PC-9 (cell line): ENCODE measurements at regions of chr7 and their contacts with region 1.

Region 1: DNA sequence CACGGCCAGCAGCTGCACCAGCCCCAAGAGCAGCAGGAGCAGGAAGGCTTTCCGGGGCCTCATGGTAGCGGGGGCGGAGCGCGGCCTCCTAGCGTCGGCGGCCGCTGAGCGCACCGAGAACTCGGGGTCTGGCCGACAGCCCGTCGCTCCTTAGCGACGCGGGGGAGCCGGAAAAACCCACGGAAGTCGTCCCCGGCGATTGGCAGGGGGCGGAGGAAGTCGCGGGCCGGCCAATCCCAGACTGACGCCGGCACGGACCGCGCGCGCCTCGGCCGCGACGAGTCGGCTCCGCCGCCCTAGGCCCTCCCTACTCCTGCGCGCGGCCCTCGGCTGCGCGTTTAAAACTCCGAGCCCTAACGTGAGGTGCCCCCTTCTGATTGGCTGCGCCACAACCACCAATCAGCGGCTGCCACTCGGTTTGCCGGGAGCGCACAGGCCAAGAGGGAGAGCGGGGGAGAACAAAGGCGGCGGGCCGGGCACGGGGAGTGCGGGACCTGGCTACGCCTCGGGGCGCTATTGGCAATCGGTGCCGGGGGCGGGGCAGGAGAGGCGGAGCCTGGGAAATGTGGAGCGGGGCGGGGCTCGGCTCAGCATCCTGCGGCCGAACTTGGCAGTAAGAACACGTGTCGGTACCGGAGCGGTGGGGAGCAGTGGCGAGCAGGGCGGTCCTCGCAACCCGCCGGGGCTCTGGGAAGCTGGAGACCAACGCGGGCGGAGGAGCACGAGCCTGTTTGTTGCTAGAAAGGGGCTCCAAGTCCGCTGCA is at the start of gene PDIA4:
- DNase-seq: peak; percentile 98 to 100
- H3K4me3 ChIP-seq: peak within 1 kb of the TSS; percentile 73
- H3K27ac ChIP-seq: peak within 1 kb of the TSS; percentile 78
- H3K4me1 ChIP-seq: peaks cover 24% of the 10 kb centered on the region
- H3K27me3 ChIP-seq: no peaks in the 10 kb centered on the region
- CTCF ChIP-seq: peak; percentile 17; the same call in 1 of the 2 replicates
- total RNA-seq, gene PDIA4: 200 and 221 TPM in 2 replicates

Region 2: DNA sequence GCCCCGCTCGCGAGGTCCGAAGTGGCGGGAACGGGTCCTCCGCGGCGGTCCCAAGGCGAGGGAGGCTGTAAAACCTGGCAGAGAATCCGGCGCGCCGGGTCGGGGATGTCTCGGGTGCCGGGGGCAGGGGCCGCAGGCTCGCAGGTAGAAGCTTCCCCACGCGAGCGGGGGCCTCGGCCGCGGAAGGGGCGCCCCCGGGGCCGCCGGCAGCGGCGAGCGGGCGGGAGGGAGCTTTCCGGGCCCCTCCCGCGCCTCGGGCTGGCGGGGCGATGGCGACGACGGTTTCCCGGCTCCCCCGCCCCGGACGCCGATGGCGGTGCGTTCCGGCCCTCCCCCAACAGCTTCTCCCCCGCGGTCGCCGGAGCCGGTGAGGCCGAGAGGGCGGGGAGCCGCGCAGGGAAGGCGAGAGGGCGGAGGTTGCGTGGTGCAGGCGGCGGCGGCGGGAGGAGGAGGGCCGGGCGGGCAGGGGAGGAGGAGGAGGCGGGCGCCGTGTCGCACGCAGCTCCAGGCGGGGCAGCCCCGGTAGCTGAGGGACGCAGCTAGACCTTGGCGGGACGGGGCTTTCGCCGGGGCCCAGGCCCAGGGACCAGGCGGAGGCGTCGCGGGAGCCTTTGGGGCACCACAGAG is 330.0 kb before region 1 on chr7 and contains the start of gene CUL1:
- CTCF ChIA-PET with region 1: interaction called, 11 read pairs
- POLR2A ChIA-PET with region 1: no interaction called
- intact Hi-C with region 1: no loop called
- DNase-seq: peak; percentile 64 to 92
- H3K4me3 ChIP-seq: peak within 1 kb of the TSS; percentile 76
- H3K27ac ChIP-seq: peak within 1 kb of the TSS; percentile 79
- H3K4me1 ChIP-seq: peaks cover 39% of the 10 kb centered on the region
- H3K27me3 ChIP-seq: no peaks in the 10 kb centered on the region
- CTCF ChIP-seq: no peak
- total RNA-seq, gene CUL1: 54.7 and 78.3 TPM in 2 replicates

Region 3: GRCh38 chr7:148987010-148987750 is 41.3 kb before region 1 on chr7:
- CTCF ChIA-PET with region 1: no interaction called
- POLR2A ChIA-PET with region 1: no interaction called
- intact Hi-C with region 1: loop called (anchors 1 kb)
- DNase-seq: peak; percentile 86 to 91
- H3K4me3 ChIP-seq: peak overlapping the region; percentile 88
- H3K27ac ChIP-seq: peak overlapping the region; percentile 78
- H3K4me1 ChIP-seq: peaks cover 46% of the 10 kb centered on the region
- H3K27me3 ChIP-seq: no peaks in the 10 kb centered on the region
- CTCF ChIP-seq: no peak

Region 4: DNA sequence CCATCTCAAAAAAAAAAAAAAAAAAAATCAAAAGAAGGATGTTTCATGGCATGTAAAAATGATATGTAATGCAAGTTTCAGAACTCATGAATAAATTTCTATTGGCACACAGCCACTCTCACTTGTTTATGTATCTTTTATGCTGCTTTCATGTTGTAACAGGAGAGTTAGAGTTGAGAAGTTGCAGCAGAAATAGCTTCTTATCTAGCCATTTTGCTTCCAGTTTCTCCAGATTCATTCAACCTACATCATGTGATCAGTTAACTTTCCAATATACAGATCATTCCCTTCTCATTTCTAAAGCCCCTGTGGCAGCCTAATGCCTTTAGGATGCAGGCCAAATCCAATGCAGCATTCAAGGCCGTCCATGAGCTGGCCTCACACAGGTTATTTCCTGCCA is 31.6 kb after region 1 on chr7:
- CTCF ChIA-PET with region 1: no interaction called
- POLR2A ChIA-PET with region 1: no interaction called
- intact Hi-C with region 1: loop called (anchors 1 kb)
- DNase-seq: no peak
- H3K4me3 ChIP-seq: no peak overlapping the region
- H3K27ac ChIP-seq: no peak overlapping the region
- H3K4me1 ChIP-seq: peaks cover 11% of the 10 kb centered on the region
- H3K27me3 ChIP-seq: no peaks in the 10 kb centered on the region
- CTCF ChIP-seq: no peak

Region 5: GRCh38 chr7:149090397-149091195 is 62.1 kb after region 1 on chr7 and contains the start of gene ZNF786:
- CTCF ChIA-PET with region 1: no interaction called
- POLR2A ChIA-PET with region 1: no interaction called
- intact Hi-C with region 1: loop called (anchors 2 kb)
- DNase-seq: peak; percentile 71 to 87
- H3K4me3 ChIP-seq: peak within 1 kb of the TSS; percentile 96
- H3K27ac ChIP-seq: peak within 1 kb of the TSS; percentile 85
- H3K4me1 ChIP-seq: no peaks in the 10 kb centered on the region; the same call in 1 of the 2 replicates
- H3K27me3 ChIP-seq: no peaks in the 10 kb centered on the region
- CTCF ChIP-seq: peak; percentile 92
- total RNA-seq, gene ZNF786: 7.0 and 8.4 TPM in 2 replicates